Right ventricle myocardium inferior (tissue), 1 donor: ENCODE measurements at regions of chr1 and their contacts with region 1.

Region 1: GRCh38 chr1:31182352-31182751 is 57.3 kb downstream of the NKAIN1 start:
- DNase-seq: peak; percentile 81
- ATAC-seq: peak; percentile 91

Region 2: DNA sequence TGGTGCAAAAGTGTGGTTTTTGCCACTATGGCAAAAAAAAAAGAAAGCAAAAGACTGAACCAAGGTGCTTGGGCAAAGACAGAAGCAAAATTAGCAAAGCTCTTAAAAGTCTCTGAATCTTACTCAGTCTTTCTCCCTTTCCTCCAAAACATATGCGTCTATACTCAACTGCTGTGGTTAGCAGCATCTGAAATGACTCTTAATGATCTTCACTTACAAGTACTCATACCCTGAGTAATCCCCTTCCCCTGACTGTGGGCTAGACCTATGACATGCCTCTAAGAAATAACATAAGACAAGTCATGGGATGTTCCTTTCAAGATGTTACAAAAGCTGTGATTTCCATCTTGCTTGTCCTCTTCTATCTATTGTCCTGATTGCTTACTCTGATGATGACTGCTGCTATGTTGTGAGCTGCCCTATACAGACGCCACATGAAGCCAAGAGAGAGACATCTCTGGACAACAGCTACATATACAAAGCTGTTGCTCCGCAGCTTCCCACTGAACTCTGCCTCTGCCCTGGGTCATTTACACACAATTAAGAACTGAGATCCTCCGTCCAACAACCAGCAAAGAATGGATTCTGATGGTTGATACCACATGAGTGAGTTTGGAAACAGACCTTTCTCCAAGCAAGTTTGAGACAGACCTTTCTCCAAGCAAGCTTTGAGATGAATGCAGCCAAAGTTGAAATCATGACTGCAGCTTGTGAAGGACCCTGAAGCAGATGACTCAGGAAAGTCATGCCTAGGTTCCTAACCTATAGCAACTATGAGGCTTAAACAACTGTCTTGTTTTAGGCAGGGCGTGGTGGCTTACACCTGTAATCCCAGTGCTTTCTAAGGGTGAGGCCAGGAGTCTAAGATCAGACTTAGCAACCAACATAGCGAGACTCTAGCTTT is 172.0 kb before region 1 on chr1:
- intact Hi-C with region 1: no loop called
- DNase-seq: no peak
- ATAC-seq: no peak

Region 3: DNA sequence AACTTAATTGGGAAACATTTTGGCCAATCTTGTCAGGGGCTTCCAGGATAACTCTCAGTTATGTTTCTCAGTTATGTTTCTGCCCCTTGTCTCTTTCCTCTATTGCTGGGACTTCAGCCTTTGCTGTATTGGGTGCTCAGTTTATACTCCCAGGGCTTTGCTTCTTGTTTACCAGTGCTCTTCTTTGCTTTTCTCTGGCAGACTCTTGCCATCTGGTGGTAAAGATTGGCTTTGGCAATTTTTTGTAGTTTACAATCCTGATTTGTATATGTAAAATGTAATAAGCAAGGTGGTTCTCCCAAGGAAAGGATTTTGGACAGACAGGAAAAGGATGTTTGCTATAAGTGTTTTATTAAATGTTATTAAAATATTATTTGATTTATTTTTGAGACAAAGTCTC is 152.7 kb after region 1 on chr1:
- intact Hi-C with region 1: loop called (anchors 1 kb)
- DNase-seq: no peak
- ATAC-seq: no peak

Region 4: DNA sequence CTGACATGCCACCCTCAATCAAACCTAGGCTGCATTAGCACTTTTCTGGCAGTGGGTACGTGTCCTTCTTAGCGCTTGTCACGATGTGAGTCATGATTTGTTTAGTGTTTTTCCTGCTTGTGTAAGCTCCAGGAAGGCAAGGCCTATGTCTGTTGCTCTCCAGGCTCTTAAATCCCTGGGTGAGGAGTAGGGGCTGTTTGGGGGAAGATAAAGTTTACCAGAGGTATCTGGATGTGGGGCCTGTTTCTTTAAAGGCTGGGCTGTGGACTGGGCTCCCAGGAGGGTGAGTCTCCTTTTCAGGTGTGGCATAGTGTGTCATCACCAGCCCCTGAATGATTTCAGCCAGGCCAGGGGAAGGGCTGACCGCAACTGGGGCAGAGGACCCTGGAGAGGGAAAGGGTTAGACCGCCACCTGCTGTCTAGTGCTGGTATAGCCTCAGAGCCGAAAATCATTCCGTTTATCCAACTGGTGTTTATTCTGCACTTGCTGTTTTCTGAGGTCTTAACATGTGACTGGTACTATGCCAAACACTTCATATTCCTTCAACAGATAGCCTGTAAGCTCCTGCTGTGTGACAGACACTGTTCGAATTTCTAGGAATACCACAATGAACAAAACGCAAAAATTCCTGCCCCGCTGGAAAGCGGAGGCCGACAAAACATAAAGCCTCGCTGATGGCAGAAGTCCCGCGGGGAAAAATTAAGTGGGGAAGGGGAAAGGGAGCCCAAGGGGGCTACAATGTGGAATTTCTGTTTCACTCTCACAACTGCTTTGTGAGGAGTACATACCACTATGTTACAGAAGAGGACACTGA is 240.4 kb after region 1 on chr1:
- intact Hi-C with region 1: loop called (anchors 1 kb)
- DNase-seq: no peak
- ATAC-seq: peak; percentile 63

Region 5: DNA sequence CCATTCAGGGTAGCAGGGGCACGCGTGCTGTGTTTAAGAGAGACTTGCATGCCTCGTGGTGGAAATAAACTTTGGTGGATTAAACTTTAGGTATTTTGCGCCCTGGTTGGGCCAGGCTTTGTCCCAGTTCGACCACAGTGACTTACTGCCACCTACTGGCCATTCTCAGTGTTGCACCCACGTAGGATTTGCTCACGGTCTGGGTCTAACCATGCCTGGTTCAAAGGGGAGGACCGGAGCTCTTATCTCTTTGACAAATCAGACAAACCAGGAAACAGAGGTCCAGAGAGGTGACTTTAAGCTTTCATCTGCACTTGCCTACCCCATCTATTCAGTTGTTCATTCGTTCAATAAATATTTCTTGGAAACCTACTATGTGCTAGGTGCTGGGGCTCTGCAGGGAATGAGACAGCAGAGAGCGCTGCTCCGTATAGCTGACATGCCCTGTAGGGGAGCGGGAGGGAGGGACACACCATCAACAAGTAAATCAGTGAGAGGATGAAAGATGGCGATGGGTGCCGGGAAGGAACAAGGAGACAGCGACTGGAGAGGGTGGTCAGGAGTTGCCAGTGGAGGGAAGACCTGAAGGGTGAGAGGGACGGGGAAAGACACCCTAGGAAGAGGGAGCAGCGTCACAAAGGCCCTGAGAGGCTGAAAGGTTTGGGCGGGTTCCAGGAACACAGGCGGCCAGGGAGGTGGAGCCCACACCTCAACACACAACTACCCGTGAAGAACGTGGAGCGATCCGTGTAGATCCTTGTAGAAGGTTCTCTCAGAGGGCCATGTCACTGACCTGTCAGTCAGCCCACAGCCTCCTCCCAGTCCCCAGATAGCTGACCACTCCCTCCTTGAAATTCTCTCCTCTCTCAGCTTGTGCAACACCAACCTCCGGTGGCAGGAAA is 366.8 kb after region 1 on chr1:
- intact Hi-C with region 1: loop called (anchors 5 kb)
- DNase-seq: peak; percentile 82
- ATAC-seq: peak; percentile 94